ENCODE measurements at regions of chr1 and their contacts with region 1.

Region 1: GRCh38 chr1:206106328-206107167 is 10.6 kb downstream of the AVPR1B start:
- DNase-seq: peak; percentile 61
- H3K4me3 ChIP-seq: no peak overlapping the region
- H3K27ac ChIP-seq: no peak overlapping the region
- H3K27me3 ChIP-seq: peaks cover 43% of the 10 kb centered on the region
- CTCF ChIP-seq: peak; percentile 92

Region 2: DNA sequence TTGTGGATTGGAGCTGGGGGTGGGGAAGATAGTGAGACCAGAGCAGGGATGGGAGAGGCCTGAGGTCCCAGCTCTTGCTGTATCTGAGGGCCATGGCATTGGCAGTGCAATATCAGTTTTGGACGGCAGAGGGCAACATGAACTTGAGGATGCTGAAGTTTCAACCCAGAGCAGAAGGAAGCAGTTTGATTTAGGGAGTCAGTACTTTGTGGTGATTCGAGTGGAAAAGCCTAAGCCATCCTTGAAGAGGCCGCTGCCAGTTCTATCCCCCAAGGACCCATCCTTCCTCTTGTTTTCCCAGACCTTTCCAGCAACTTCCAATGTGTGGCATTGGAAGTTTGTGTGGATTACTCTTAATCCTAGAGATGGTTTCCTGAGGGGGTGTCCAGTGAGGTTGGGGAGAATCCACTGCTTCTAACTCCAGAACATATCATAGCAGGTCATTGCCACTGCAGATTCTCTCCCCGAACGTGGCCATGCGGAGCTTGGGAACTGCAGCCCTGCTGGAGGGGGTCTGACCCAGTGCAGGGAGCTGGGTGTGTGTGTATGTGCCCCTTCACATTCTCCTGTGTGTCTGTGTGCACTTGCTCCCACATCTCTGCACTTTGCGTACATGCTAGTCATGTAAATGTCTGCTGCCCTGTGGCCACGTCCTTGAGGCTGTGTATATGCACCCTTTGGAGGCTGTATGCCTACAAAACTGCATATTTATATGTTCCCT is 187.4 kb before region 1 on chr1:
- CTCF ChIA-PET with region 1: interaction called, 27 read pairs
- POLR2A ChIA-PET with region 1: no interaction called
- DNase-seq: peak; percentile 60
- H3K4me3 ChIP-seq: no peak overlapping the region
- H3K27ac ChIP-seq: no peak overlapping the region
- H3K27me3 ChIP-seq: peaks cover 9% of the 10 kb centered on the region
- CTCF ChIP-seq: peak; percentile 93

Region 3: GRCh38 chr1:205983925-205984725 is 122.4 kb before region 1 on chr1:
- CTCF ChIA-PET with region 1: interaction called, 156 read pairs
- POLR2A ChIA-PET with region 1: no interaction called
- DNase-seq: peak; percentile 16
- H3K4me3 ChIP-seq: no peak overlapping the region
- H3K27ac ChIP-seq: peak overlapping the region; percentile 2
- H3K27me3 ChIP-seq: no peaks in the 10 kb centered on the region
- CTCF ChIP-seq: peak; percentile 94

Region 4: DNA sequence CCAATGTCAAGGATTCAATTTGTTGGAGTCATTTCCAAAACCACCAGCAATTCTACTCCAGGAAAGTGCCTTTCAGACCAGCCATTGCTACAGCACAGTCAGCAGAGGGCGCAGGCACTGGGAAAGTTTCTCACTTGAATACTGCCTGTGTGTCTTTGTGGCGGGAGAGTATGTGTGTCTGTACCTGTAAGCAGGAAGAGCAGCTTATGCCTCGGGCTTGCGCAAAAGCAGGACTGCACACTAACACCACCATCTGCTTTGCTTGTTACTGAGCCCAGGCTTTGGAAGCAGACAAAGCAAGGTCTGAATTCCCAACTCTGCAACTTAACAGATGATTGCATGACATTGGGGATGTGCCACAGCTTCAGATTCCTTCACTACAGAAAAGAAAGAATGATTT is 75.8 kb before region 1 on chr1:
- CTCF ChIA-PET with region 1: interaction called, 23 read pairs
- POLR2A ChIA-PET with region 1: no interaction called
- DNase-seq: peak; percentile 27
- H3K4me3 ChIP-seq: no peak overlapping the region
- H3K27ac ChIP-seq: no peak overlapping the region
- H3K27me3 ChIP-seq: peaks cover 57% of the 10 kb centered on the region
- CTCF ChIP-seq: peak; percentile 96

Measured in AG04450 (cell line).